ENCODE measurements at regions of chr2 and their contacts with region 1.

Region 1: GRCh38 chr2:237336131-237336530 is 77.8 kb downstream of the COL6A3 start:
- DNase-seq: no peak
- H3K4me3 ChIP-seq: no peak overlapping the region
- H3K27ac ChIP-seq: no peak overlapping the region
- H3K4me1 ChIP-seq: no peaks in the 10 kb centered on the region
- H3K27me3 ChIP-seq: no peaks in the 10 kb centered on the region
- CTCF ChIP-seq: no peak

Region 2: GRCh38 chr2:237943395-237944094 is 607.4 kb after region 1 on chr2:
- CTCF ChIA-PET with region 1: interaction called, 16 read pairs
- POLR2A ChIA-PET with region 1: no interaction called
- intact Hi-C with region 1: no loop called
- DNase-seq: no peak
- H3K4me3 ChIP-seq: no peak overlapping the region
- H3K27ac ChIP-seq: no peak overlapping the region
- H3K4me1 ChIP-seq: no peaks in the 10 kb centered on the region
- H3K27me3 ChIP-seq: no peaks in the 10 kb centered on the region
- CTCF ChIP-seq: no peak

Measured in PC-9 (cell line).